Right ventricle myocardium inferior (tissue), 1 donor: ENCODE measurements at regions of chr11 and their contacts with region 1.

Region 1: GRCh38 chr11:111229604-111230003 is 15.9 kb upstream of the POU2AF2 start:
- DNase-seq: no peak
- ATAC-seq: no peak

Region 2: GRCh38 chr11:110711776-110712658 is 517.6 kb before region 1 on chr11 and contains the start of gene ARHGAP20:
- intact Hi-C with region 1: loop called (anchors 10 kb)
- DNase-seq: peak; percentile 79
- ATAC-seq: peak; percentile 97
- total RNA-seq, gene ARHGAP20: 0.46 TPM